ENCODE measurements at regions of chr4 and their contacts with region 1.

Region 1: DNA sequence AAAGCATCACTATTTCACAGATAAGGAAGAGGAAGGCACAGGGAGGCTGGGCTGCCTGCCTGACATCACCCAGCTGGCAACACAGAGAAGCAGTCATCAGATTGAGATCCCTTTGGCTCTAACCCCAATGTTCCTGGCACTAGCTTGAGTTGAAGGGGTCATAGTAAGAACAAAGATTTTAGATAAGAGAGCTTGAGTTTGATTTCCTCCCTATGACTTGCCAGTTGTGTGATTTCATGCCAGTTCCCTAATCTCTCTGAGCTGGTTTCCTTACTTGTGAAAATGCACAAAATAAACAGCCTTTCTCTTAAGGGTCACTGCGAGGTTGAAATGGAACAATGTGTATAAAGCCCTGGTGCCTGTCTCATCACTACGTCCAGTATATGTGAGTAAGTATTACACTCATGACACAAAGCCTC is 475.4 kb upstream of the HS3ST1 start:
- DNase-seq: peak; percentile 100
- H3K4me3 ChIP-seq: no peak overlapping the region
- H3K27ac ChIP-seq: peak overlapping the region; percentile 100
- H3K4me1 ChIP-seq: peaks cover 26% of the 10 kb centered on the region
- H3K27me3 ChIP-seq: no peaks in the 10 kb centered on the region
- CTCF ChIP-seq: no peak
- POLR2A ChIP-seq: peak; percentile 33

Region 2: DNA sequence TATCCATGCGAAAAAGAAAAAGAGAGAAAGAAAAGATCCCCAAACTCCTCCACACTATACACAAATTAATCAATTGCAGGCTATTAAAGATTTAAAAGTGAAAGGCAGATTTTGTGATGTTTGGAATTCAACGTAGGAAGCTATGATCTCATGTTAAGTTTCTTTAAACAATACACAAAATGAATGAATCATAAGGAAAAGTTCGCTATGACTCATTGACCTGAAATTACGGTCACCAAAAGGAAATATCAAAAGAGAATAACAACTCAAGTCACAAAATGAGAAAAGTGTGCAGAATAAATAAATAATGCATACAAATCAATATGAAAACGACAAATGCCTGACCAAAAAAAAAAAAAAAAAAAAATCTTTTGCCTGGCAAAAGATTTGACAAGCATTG is 1248.1 kb before region 1 on chr4:
- CTCF ChIA-PET with region 1: no interaction called
- POLR2A ChIA-PET with region 1: no interaction called
- dilution Hi-C with region 1: no loop called
- intact Hi-C with region 1: loop called (anchors 1 kb)
- DNase-seq: peak; percentile 92
- H3K4me3 ChIP-seq: peak overlapping the region in 1 of 3 experiments; percentile 27
- H3K27ac ChIP-seq: peak overlapping the region; percentile 76
- H3K4me1 ChIP-seq: peaks cover 22% of the 10 kb centered on the region
- H3K27me3 ChIP-seq: no peaks in the 10 kb centered on the region
- CTCF ChIP-seq: no peak
- POLR2A ChIP-seq: no peak

Region 3: GRCh38 chr4:11623726-11624037 is 280.4 kb before region 1 on chr4:
- CTCF ChIA-PET with region 1: no interaction called
- POLR2A ChIA-PET with region 1: no interaction called
- dilution Hi-C with region 1: no loop called
- intact Hi-C with region 1: loop called (anchors 1 kb)
- DNase-seq: peak; percentile 45
- H3K4me3 ChIP-seq: no peak overlapping the region
- H3K27ac ChIP-seq: no peak overlapping the region
- H3K4me1 ChIP-seq: peaks cover 10% of the 10 kb centered on the region
- H3K27me3 ChIP-seq: no peaks in the 10 kb centered on the region
- CTCF ChIP-seq: peak; percentile 11 to 48
- POLR2A ChIP-seq: no peak

Region 4: GRCh38 chr4:11743236-11743635 is 160.9 kb before region 1 on chr4:
- CTCF ChIA-PET with region 1: interaction called, 8 read pairs
- POLR2A ChIA-PET with region 1: interaction called, 3 read pairs
- dilution Hi-C with region 1: no loop called
- intact Hi-C with region 1: loop called (anchors 1 kb)
- DNase-seq: peak; percentile 82
- H3K4me3 ChIP-seq: peak overlapping the region in 1 of 3 experiments; percentile 56
- H3K27ac ChIP-seq: peak overlapping the region; percentile 82
- H3K4me1 ChIP-seq: peaks cover 77% of the 10 kb centered on the region
- H3K27me3 ChIP-seq: no peaks in the 10 kb centered on the region
- CTCF ChIP-seq: no peak
- POLR2A ChIP-seq: no peak

Region 5: GRCh38 chr4:11805842-11806241 is 98.3 kb before region 1 on chr4:
- CTCF ChIA-PET with region 1: interaction called, 16 read pairs
- POLR2A ChIA-PET with region 1: no interaction called
- dilution Hi-C with region 1: no loop called
- intact Hi-C with region 1: loop called (anchors 1 kb)
- DNase-seq: peak; percentile 81
- H3K4me3 ChIP-seq: no peak overlapping the region
- H3K27ac ChIP-seq: peak overlapping the region; percentile 45
- H3K4me1 ChIP-seq: peaks cover 21% of the 10 kb centered on the region
- H3K27me3 ChIP-seq: no peaks in the 10 kb centered on the region
- CTCF ChIP-seq: peak; percentile 58 to 65
- POLR2A ChIP-seq: no peak

Region 6: DNA sequence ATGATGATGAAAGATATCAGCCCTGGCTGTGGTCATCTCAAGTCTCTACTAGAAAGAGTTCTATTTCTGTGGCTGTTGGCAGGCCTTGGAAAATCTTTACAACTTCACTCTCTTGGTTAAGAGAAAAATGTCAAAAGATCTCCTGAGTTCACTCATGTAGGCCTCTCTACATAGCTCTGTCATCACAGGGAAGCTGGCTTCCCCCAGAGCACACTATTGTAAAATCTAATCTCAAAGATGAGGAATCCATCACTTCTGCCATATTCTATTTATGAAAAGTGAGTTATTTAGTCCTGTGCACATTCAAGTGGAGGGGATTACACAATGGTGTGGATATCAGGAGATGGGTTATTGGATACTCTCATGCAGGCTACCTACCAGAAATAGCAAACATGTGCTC is 87.0 kb before region 1 on chr4:
- CTCF ChIA-PET with region 1: no interaction called
- POLR2A ChIA-PET with region 1: no interaction called
- dilution Hi-C with region 1: no loop called
- intact Hi-C with region 1: no loop called
- DNase-seq: no peak
- H3K4me3 ChIP-seq: no peak overlapping the region
- H3K27ac ChIP-seq: no peak overlapping the region
- H3K4me1 ChIP-seq: no peaks in the 10 kb centered on the region
- H3K27me3 ChIP-seq: no peaks in the 10 kb centered on the region
- CTCF ChIP-seq: no peak
- POLR2A ChIP-seq: no peak

Region 7: DNA sequence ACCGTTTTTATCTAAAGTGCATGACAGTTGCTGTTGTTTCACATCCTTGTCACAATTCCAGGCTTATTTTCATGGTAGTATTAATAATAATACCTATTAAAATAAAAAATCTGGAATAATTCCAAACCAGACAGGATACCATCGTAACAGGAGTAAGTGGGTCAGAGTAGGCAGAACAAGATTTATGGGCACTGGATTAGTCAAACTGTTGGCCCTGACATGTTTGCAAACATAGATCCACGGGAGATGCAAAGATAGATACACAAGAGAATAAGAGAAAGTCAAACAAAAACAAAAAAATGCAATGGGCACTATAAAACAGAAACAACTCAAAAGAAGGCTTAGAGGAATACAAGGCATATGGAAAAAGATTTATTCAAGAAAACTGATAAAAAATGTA is 25.9 kb before region 1 on chr4:
- CTCF ChIA-PET with region 1: no interaction called
- POLR2A ChIA-PET with region 1: no interaction called
- dilution Hi-C with region 1: no loop called
- intact Hi-C with region 1: no loop called
- DNase-seq: no peak
- H3K4me3 ChIP-seq: no peak overlapping the region
- H3K27ac ChIP-seq: no peak overlapping the region
- H3K4me1 ChIP-seq: no peaks in the 10 kb centered on the region
- H3K27me3 ChIP-seq: no peaks in the 10 kb centered on the region
- CTCF ChIP-seq: no peak
- POLR2A ChIP-seq: no peak

Region 8: DNA sequence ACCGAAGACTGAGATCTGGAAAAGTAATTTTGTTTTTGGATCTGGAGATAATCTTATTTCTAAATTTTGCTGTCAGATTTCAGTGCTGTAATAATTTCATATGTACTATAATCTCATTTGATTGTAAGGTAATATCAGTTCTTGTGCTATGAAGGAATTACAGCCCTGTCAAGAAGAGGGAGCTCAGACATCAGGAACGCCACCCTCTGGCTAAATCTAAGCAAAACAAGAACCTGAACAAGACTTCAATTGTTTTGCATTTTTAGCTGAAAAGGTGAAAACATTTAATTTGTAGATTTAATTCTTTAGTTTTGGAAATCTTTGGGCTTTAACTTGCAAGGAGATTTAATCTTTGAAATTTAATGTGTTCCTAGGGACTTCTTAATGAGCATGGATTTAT is 50.0 kb after region 1 on chr4:
- CTCF ChIA-PET with region 1: interaction called, 29 read pairs
- POLR2A ChIA-PET with region 1: no interaction called
- dilution Hi-C with region 1: no loop called
- intact Hi-C with region 1: loop called (anchors 1 kb)
- DNase-seq: peak; percentile 79
- H3K4me3 ChIP-seq: no peak overlapping the region
- H3K27ac ChIP-seq: no peak overlapping the region
- H3K4me1 ChIP-seq: no peaks in the 10 kb centered on the region
- H3K27me3 ChIP-seq: no peaks in the 10 kb centered on the region
- CTCF ChIP-seq: peak; percentile 32 to 50
- POLR2A ChIP-seq: no peak

Measured in endothelial cell of umbilical vein (primary cell).